ENCODE measurements at regions of chr1 and their contacts with region 1.

Region 1: DNA sequence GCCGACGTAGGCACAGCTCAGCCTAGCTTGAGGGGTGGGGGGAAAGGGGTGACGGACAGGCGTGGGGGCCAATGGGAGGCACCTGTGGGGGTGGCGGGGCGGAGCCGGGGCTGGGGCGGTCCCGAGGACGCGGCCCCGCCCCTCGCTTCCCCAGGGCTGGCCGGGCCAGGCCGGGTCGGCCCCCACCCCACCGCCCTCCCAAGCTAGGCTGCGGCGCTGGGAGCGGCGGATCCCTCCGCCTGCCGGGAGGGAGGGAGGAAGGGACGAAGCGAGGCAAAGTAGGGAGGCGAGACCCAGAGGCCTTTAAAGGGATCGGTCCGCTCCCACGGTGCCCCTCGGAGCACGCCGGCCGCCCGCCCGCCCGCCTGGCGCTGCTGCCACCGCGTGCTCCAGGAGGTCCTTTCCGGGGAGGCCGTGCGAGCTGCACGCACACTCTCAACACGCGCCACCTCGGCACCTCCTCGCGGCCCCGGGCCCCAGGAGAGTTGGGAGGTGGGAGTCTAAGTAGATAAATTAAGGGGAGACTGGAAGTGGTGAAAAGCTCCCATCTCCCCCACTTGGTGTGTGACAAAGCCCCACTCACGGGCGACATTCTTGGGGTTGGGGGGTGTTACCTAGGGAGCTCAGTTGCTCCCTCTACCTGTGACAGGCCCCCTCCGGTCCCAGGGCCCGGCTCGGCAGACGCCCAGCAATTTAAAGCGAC is 373 bp upstream of the MEF2D start:
- DNase-seq: peak; percentile 96
- ATAC-seq: peak; percentile 65
- H3K4me3 Mint-ChIP-seq: peak overlapping the region; percentile 88
- H3K27ac Mint-ChIP-seq: peak overlapping the region; percentile 99
- H3K4me1 Mint-ChIP-seq: peaks cover 73% of the 10 kb centered on the region
- H3K27me3 Mint-ChIP-seq: no peaks in the 10 kb centered on the region

Region 2: GRCh38 chr1:156096640-156097391 is 404.1 kb before region 1 on chr1:
- CTCF ChIA-PET with region 1: interaction called, 3 read pairs
- POLR2A ChIA-PET with region 1: interaction called, 3 read pairs
- intact Hi-C with region 1: loop called in 1 of 2 experiments (anchors 5 kb)
- DNase-seq: peak; percentile 96
- ATAC-seq: peak; percentile 76
- H3K4me3 Mint-ChIP-seq: peak overlapping the region; percentile 60
- H3K27ac Mint-ChIP-seq: peak overlapping the region; percentile 94
- H3K4me1 Mint-ChIP-seq: peaks cover 58% of the 10 kb centered on the region
- H3K27me3 Mint-ChIP-seq: peaks cover 7% of the 10 kb centered on the region

Region 3: DNA sequence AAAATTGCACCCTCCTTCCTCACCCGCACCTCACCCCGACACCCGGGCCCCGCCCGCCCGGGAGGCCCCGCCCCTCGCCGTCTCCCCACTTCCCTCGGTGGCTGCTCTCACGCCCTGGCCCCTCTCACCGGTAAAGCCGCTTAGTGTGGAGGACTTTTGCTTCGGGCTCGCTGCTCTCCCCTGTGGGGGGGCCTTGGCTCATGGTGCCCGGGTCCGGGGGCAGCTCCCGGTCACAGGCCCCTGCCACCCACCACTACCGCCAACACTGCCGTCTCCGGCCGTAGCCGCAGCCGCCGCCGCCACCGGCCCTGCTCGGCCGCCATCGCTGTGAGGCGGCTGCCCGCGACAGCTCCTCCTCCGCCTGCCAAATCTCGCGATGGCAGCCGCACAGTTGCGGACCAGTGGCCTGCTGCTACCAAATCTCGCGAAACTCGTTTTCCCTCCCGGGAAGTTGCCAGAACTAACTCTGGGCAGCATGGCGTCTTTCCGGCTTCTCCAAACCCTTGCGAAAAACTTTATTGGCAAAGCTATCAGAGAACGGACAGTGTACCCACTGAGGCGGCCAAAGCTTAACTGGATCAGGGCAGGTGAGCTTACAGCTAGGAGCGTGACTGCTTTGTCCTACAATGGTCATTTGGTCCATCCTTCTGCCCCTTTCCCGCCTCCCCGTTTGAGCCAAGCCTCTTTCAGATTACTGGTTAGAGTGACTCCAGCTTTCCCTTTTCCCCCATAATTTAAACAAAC is 218.3 kb before region 1 on chr1 and contains the start of gene SMG5:
- CTCF ChIA-PET with region 1: interaction called, 5 read pairs
- POLR2A ChIA-PET with region 1: no interaction called
- intact Hi-C with region 1: loop called in 1 of 2 experiments (anchors 1 kb)
- DNase-seq: peak; percentile 98
- ATAC-seq: peak; percentile 92
- H3K4me3 Mint-ChIP-seq: peak within 1 kb of the TSS; percentile 96
- H3K27ac Mint-ChIP-seq: peak within 1 kb of the TSS; percentile 92
- H3K4me1 Mint-ChIP-seq: peaks cover 29% of the 10 kb centered on the region
- H3K27me3 Mint-ChIP-seq: no peaks in the 10 kb centered on the region
- total RNA-seq, gene SMG5: 61.7 to 64.6 TPM

Region 4: DNA sequence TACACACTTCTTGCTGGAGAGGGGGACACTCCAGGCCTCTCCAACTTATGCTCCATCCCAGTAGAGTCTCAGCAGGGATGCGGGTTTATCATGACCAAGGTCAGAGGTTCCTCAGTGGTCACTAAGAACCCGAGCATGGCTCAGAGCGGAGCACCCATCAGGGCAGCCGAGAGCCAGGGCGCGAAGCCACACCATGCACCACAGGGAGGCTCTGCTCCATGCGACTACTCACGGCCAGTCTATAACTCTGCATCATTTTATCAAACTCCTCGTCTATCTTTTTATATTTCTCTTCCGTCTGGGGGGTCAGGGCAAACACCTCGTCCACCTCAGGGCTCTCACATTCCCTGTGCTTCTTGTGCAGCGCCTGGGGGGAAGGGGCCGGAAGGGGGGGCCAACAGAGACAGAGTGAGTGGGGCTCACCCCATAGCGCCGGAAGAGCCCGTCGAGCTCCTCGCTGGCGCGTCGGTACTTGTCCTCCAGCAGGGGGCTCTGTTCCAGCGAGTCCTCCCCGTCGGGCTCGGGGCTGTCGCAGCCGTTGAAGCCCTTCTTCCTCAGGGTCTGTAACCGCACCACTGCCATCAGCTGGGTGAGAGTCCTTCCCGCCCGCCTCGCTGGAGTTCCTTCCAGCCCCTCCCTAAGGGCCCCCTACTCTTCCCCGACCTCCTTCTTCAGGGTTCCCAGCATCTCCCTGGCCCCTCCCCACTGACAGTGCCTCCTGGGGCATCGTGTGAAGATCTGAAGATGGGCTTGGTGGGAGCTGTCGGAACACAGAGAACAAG is 20.3 kb before region 1 on chr1:
- CTCF ChIA-PET with region 1: interaction called, 63 read pairs
- POLR2A ChIA-PET with region 1: interaction called, 7 read pairs
- intact Hi-C with region 1: loop called (anchors 1 kb)
- DNase-seq: peak; percentile 89
- ATAC-seq: peak; percentile 82
- H3K4me3 Mint-ChIP-seq: peak overlapping the region; percentile 25
- H3K27ac Mint-ChIP-seq: peak overlapping the region; percentile 72
- H3K4me1 Mint-ChIP-seq: peaks cover 64% of the 10 kb centered on the region
- H3K27me3 Mint-ChIP-seq: no peaks in the 10 kb centered on the region

Region 5: GRCh38 chr1:156591432-156592157 is 90.6 kb after region 1 on chr1 and contains the start of gene NAXE:
- CTCF ChIA-PET with region 1: no interaction called
- POLR2A ChIA-PET with region 1: interaction called, 3 read pairs
- intact Hi-C with region 1: loop called in 1 of 2 experiments (anchors 2 kb)
- DNase-seq: peak; percentile 82
- ATAC-seq: peak; percentile 94
- H3K4me3 Mint-ChIP-seq: peak within 1 kb of the TSS; percentile 80
- H3K27ac Mint-ChIP-seq: peak within 1 kb of the TSS; percentile 93
- H3K4me1 Mint-ChIP-seq: peaks cover 24% of the 10 kb centered on the region
- H3K27me3 Mint-ChIP-seq: no peaks in the 10 kb centered on the region
- total RNA-seq, gene NAXE: 79.9 to 82.0 TPM

Region 6: DNA sequence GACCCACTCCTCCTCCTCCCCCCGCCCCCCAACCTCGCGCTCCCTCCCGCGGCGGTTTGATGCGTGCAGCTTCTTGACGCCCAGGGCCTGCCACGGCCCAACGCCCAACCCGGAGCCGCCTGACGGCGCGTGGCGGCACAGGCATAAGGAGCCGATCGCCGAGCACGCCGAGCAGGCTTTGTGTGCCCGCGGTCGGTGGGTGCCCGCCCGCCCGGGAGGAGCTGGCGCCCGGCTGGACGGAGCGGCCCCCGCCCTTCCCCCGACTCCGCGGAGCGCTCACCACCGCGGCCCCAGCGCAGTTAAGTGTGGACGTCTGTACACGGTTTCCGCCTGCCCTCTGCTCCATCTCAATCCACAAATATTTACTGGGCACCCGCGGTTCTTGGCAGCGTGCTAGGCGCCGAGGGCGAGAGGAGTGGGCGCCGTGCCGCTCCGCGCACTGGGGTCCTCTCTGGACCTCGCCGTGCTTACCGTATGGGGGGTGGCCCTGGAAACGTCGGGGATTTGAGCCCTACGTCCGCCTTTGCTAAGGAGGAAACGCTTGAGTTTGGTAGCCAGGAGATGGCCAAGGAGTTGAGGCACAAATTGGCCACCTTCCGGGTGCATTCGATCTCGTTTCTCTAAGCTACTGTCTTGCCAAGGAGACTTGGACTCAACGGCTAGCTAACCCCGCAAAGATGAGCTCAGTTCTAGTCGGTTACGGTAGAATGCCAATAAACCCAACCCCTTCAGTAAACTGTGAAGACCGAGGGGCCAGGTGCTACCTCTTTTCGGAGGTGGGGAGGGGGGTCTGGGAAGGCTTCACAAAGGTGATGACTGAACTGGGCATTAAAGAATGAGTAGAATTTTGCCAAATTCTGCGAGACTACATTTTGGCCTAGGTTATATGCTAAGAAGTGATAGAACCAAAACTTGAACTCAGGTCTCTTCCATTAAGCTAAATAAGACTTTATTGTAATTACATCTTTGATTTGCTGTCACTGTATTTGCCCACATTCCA is 251.1 kb after region 1 on chr1:
- CTCF ChIA-PET with region 1: no interaction called
- POLR2A ChIA-PET with region 1: no interaction called
- intact Hi-C with region 1: loop called in 1 of 2 experiments (anchors 1 kb)
- DNase-seq: peak; percentile 99
- ATAC-seq: peak; percentile 81
- H3K4me3 Mint-ChIP-seq: peak overlapping the region; percentile 98
- H3K27ac Mint-ChIP-seq: peak overlapping the region; percentile 93
- H3K4me1 Mint-ChIP-seq: peaks cover 33% of the 10 kb centered on the region
- H3K27me3 Mint-ChIP-seq: no peaks in the 10 kb centered on the region

Region 7: GRCh38 chr1:157138220-157139051 is 637.5 kb after region 1 on chr1 and contains the start of gene ETV3:
- CTCF ChIA-PET with region 1: no interaction called
- POLR2A ChIA-PET with region 1: no interaction called
- intact Hi-C with region 1: loop called in 1 of 2 experiments (anchors 5 kb)
- DNase-seq: peak; percentile 94
- ATAC-seq: peak; percentile 72
- H3K4me3 Mint-ChIP-seq: peak within 1 kb of the TSS; percentile 97
- H3K27ac Mint-ChIP-seq: peak within 1 kb of the TSS; percentile 95
- H3K4me1 Mint-ChIP-seq: peaks cover 75% of the 10 kb centered on the region
- H3K27me3 Mint-ChIP-seq: no peaks in the 10 kb centered on the region
- total RNA-seq, gene ETV3: 32.0 to 36.7 TPM

Measured in activated CD4-positive, alpha-beta T cell treated with anti-CD3 and anti-CD28 coated beads for 36 hours (primary cell).